Ovary (tissue), 10 donors: ENCODE measurements at regions of chr10 and their contacts with region 1.

Region 1: GRCh38 chr10:89793649-89794254 is 92.4 kb downstream of the KIF20B start:
- DNase-seq: no peak
- H3K4me3 ChIP-seq: no peak overlapping the region
- H3K27ac ChIP-seq: no peak overlapping the region
- H3K4me1 ChIP-seq: no peaks in the 10 kb centered on the region
- H3K27me3 ChIP-seq: no peaks in the 10 kb centered on the region
- CTCF ChIP-seq: peak in 1 of 3 donors; percentile 46
- EP300 ChIP-seq: no peak
- POLR2A ChIP-seq: no peak

Region 2: DNA sequence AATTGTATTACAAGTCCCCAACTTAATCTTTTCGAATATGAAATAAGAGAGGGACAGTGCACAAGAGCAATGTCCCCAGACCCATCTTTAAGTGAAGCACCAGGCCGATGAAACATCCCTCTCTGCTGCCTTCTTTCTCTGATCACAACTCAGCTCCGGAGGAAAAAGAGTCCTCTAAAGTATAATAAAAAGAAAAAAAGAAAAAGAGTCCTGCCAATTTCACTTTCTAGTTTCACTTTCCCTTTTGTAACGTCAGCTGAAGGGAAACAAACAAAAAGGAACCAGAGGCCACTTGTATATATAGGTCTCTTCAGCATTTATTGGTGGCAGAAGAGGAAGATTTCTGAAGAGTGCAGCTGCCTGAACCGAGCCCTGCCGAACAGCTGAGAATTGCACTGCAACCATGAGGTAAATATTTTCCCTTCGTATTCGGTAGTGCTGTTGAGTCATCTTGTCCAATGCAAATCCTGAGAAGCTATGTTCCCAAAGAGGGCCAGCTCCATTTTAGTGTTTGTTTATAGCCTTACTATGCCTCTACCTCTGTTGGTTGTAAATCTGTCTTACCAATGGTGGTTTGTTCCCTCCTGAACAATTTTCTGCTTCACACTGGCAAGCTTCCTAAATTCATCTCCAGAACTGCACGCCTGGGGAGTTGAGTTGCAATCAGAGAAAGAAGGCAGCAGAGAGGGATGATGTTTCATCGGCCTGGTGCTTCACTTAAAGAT is 491.9 kb before region 1 on chr10 and contains the start of gene IFIT2:
- intact Hi-C with region 1: no loop called
- DNase-seq: peak in 3 of 5 donors; percentile 33 to 47 (median 37)
- H3K4me3 ChIP-seq: peak within 1 kb of the TSS; percentile 48
- H3K27ac ChIP-seq: peak within 1 kb of the TSS; percentile 65 to 88
- H3K4me1 ChIP-seq: peaks cover 11% of the 10 kb centered on the region
- H3K27me3 ChIP-seq: no peaks in the 10 kb centered on the region
- CTCF ChIP-seq: no peak
- EP300 ChIP-seq: no peak
- POLR2A ChIP-seq: peak; percentile 42
- total RNA-seq, gene IFIT2: 2.1 to 10.0 (median 4.8) TPM

Region 3: GRCh38 chr10:89369156-89370105 is 424.3 kb before region 1 on chr10:
- intact Hi-C with region 1: no loop called
- DNase-seq: peak in 1 of 5 donors; percentile 41
- H3K4me3 ChIP-seq: no peak overlapping the region
- H3K27ac ChIP-seq: no peak overlapping the region
- H3K4me1 ChIP-seq: peaks cover 8% of the 10 kb centered on the region
- H3K27me3 ChIP-seq: no peaks in the 10 kb centered on the region
- CTCF ChIP-seq: peak in 2 of 3 donors; percentile 28 to 71
- EP300 ChIP-seq: no peak
- POLR2A ChIP-seq: no peak

Region 4: GRCh38 chr10:89929282-89930026 is 135.7 kb after region 1 on chr10:
- intact Hi-C with region 1: no loop called
- DNase-seq: no peak
- H3K4me3 ChIP-seq: no peak overlapping the region
- H3K27ac ChIP-seq: no peak overlapping the region
- H3K4me1 ChIP-seq: no peaks in the 10 kb centered on the region
- H3K27me3 ChIP-seq: no peaks in the 10 kb centered on the region
- CTCF ChIP-seq: no peak
- EP300 ChIP-seq: no peak
- POLR2A ChIP-seq: no peak

Region 5: DNA sequence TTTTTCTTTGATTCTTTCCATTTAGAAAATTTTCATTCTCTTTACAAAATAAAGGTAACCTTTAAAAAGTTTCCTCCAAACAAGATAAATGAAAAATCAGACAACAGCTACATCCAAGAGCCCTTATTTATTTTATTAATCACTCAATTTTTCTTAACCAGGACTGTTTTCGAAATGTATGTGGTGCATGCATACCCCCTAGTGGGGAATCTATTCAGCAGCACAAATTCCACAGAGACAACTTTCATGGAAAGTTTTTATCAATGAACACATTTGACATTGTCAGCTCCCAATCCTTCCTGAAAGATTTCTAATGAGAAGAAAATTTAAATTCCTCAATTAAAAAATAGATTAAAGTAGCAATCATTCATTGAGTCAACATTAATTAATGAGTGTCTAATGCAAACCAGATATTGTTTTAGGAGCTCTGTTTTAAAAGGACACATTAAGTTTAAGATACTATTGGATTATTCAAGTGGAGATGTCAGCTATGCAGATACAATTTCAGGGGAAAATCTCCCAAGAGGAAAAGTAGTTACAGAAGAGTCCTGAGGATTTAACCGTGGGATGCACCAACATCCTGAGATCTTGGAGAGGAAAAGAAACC is 1069.3 kb after region 1 on chr10:
- intact Hi-C with region 1: loop called in 2 of 4 experiments (anchors 5 to 10 kb)
- DNase-seq: no peak
- H3K4me3 ChIP-seq: no peak overlapping the region
- H3K27ac ChIP-seq: no peak overlapping the region
- H3K4me1 ChIP-seq: no peaks in the 10 kb centered on the region
- H3K27me3 ChIP-seq: no peaks in the 10 kb centered on the region
- CTCF ChIP-seq: peak in 2 of 3 donors; percentile 17 to 27
- EP300 ChIP-seq: no peak
- POLR2A ChIP-seq: no peak